ENCODE measurements at regions of chr16 and their contacts with region 1.

Region 1: GRCh38 chr16:49592546-49593423 is 219.2 kb downstream of the C16orf78 start:
- DNase-seq: peak; percentile 44
- H3K4me3 Mint-ChIP-seq: no peak overlapping the region
- H3K27ac Mint-ChIP-seq: no peak overlapping the region
- H3K4me1 Mint-ChIP-seq: no peaks in the 10 kb centered on the region
- H3K27me3 Mint-ChIP-seq: peaks cover 5% of the 10 kb centered on the region

Region 2: GRCh38 chr16:49407873-49408550 is 184.8 kb before region 1 on chr16:
- CTCF ChIA-PET with region 1: interaction called, 32 read pairs
- POLR2A ChIA-PET with region 1: no interaction called
- intact Hi-C with region 1: loop called (anchors 1 kb)
- DNase-seq: peak; percentile 79
- H3K4me3 Mint-ChIP-seq: no peak overlapping the region
- H3K27ac Mint-ChIP-seq: no peak overlapping the region
- H3K4me1 Mint-ChIP-seq: peaks cover 2% of the 10 kb centered on the region
- H3K27me3 Mint-ChIP-seq: peaks cover 5% of the 10 kb centered on the region

Region 3: GRCh38 chr16:49441366-49441780 is 151.4 kb before region 1 on chr16:
- CTCF ChIA-PET with region 1: interaction called, 3 read pairs
- POLR2A ChIA-PET with region 1: no interaction called
- intact Hi-C with region 1: loop called (anchors 1 kb)
- DNase-seq: peak; percentile 83
- H3K4me3 Mint-ChIP-seq: peak overlapping the region; percentile 21
- H3K27ac Mint-ChIP-seq: no peak overlapping the region
- H3K4me1 Mint-ChIP-seq: peaks cover 13% of the 10 kb centered on the region
- H3K27me3 Mint-ChIP-seq: no peaks in the 10 kb centered on the region

Region 4: DNA sequence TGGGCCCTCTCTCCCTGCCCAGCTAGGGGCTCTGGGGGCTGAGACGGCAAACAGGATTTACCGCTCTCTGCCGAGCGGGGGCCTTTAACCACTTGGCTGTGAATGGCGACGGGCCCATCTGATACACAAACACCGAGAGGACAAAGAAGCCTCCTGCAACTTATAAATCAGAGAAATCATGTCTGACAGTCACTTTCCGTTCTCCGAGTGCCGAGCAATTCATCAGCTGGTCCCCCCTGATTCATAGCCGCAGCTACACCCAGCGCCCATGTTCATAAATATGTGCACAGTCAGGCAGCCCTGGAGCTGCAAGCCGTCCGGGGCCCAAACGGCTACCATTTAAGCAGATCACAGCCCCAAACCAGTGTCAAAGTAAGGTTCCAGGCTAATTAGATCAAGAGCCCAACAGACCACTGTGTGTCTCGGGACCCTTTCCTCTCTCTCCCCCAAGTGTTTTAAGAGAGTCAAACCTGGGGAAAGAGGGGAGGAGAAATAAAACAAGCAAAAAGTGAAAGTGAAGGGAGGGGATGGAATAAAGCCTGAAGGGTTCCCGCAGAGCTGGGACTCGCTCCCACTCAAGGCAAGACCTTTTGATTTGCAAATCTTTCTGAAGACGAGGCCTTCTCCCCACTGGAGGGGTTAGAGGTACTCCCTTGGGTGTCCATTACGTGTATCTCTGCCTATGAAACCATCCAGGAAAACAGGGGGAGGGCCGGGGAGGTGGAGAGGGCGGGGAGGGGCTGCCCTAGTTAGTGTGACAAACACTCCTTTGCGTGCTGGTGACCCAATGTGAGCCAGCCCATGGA is 64.5 kb before region 1 on chr16:
- CTCF ChIA-PET with region 1: no interaction called
- POLR2A ChIA-PET with region 1: no interaction called
- intact Hi-C with region 1: loop called (anchors 10 kb)
- DNase-seq: peak; percentile 40
- H3K4me3 Mint-ChIP-seq: peak overlapping the region; percentile 60
- H3K27ac Mint-ChIP-seq: no peak overlapping the region
- H3K4me1 Mint-ChIP-seq: peaks cover 8% of the 10 kb centered on the region
- H3K27me3 Mint-ChIP-seq: peaks cover 1% of the 10 kb centered on the region

Region 5: GRCh38 chr16:49631187-49632041 is 38.6 kb after region 1 on chr16:
- CTCF ChIA-PET with region 1: no interaction called
- POLR2A ChIA-PET with region 1: no interaction called
- intact Hi-C with region 1: no loop called
- DNase-seq: no peak
- H3K4me3 Mint-ChIP-seq: no peak overlapping the region
- H3K27ac Mint-ChIP-seq: no peak overlapping the region
- H3K4me1 Mint-ChIP-seq: no peaks in the 10 kb centered on the region
- H3K27me3 Mint-ChIP-seq: no peaks in the 10 kb centered on the region